ENCODE measurements at regions of chrX and their contacts with region 1.

Region 1: DNA sequence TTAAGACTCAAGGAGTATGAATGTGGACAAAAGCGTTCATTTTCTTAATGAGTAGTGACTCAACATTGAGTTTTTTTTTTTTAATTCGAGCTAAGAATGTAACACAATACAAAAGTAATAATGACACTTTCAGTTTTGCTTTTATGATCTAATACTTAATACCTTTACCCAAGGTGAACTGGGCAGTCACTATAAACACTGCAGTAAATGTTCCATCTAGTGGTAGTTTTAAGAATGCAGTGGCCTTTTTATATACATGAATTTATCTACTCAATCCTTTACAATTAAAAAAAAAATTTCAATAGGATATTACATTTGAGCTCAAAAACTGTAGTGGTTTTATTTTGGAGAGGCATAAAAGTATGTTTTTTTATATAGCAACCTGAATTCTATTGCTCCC is 33.9 kb downstream of the PDK3 start:
- DNase-seq: peak in 1 of 35 experiments; percentile 65
- ATAC-seq: peak; percentile 45 to 85 (median 65)
- H3K4me3 ChIP-seq: no peak overlapping the region
- H3K4me3 Mint-ChIP-seq: peak overlapping the region in 2 of 3 donors; percentile 17 to 40
- H3K27ac ChIP-seq: peak overlapping the region; percentile 67
- H3K27ac Mint-ChIP-seq: peak overlapping the region; percentile 69 to 82
- H3K4me1 ChIP-seq: peaks cover 0 to 8% of the 10 kb centered on the region in 2 experiments
- H3K4me1 Mint-ChIP-seq: peaks cover 26 to 30% (median 27%) of the 10 kb centered on the region in 3 donors
- H3K27me3 ChIP-seq: no peaks in the 10 kb centered on the region
- H3K27me3 Mint-ChIP-seq: no peaks in the 10 kb centered on the region

Region 2: DNA sequence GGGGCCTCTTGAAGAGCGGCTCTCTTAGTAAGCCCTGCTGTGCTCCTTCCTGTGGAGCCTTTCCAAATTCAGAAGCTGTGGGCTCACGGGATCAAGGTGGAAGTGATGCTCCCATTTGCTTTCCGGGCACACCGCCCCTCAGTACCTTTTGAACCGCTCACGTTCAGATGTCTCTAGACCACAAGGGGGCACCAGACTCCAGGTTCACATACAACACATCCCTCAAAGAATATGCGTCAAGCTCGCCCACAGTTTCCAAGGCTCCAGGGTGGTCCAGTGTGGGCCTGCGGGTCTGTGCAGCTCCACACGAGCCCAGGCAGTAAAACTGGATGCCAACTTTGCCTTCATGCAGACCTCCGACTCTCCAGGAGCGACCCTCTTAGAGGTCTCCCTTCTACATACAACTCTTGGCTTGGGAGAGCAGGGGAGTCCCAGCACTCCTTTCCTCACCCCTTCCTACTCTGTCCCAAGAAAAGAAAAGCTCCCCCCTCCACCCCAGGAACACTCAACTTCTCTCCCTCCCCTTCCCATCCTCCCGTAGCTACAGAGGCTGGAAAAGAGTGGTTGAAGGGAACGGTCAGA is 127.5 kb before region 1 on chrX:
- CTCF ChIA-PET with region 1: interaction called, 28 to 47 read pairs
- POLR2A ChIA-PET with region 1: no interaction called
- DNase-seq: peak; percentile 6 to 76 (median 40)
- ATAC-seq: peak; percentile 63 to 81 (median 72)
- H3K4me3 ChIP-seq: no peak overlapping the region
- H3K4me3 Mint-ChIP-seq: peak overlapping the region; percentile 32 to 45 (median 38)
- H3K27ac ChIP-seq: no peak overlapping the region
- H3K27ac Mint-ChIP-seq: no peak overlapping the region
- H3K4me1 ChIP-seq: peaks cover 0 to 9% of the 10 kb centered on the region in 2 experiments
- H3K4me1 Mint-ChIP-seq: peaks cover 8 to 11% (median 10%) of the 10 kb centered on the region in 3 donors
- H3K27me3 ChIP-seq: peaks cover 0 to 14% of the 10 kb centered on the region in 2 experiments
- H3K27me3 Mint-ChIP-seq: peaks cover 3 to 24% of the 10 kb centered on the region in 2 donors

Region 3: DNA sequence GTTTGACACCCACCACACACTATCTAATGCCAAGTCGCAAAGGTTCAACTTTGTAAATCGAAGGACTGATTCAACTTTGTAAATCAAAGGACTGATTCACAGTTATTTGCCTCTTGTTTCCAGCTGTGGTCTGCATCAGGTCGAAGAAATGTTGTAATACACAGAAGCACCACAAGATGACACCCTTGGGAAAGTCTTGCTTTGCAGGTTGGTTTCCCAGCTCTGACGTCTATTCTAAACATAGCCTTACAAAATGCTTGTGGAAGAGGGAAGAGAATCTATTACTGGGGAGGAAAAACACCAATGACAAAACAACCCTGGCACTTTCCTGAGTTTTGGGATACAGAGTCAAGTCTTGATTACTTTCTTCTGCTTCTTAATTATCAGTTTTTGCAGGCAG is 103.2 kb before region 1 on chrX:
- CTCF ChIA-PET with region 1: interaction called, 133 to 200 read pairs
- POLR2A ChIA-PET with region 1: no interaction called
- DNase-seq: peak in 28 of 35 experiments; percentile 2 to 79 (median 25)
- ATAC-seq: peak; percentile 50 to 70 (median 64)
- H3K4me3 ChIP-seq: no peak overlapping the region
- H3K4me3 Mint-ChIP-seq: no peak overlapping the region
- H3K27ac ChIP-seq: no peak overlapping the region
- H3K27ac Mint-ChIP-seq: no peak overlapping the region
- H3K4me1 ChIP-seq: no peaks in the 10 kb centered on the region
- H3K4me1 Mint-ChIP-seq: peaks cover 0 to 5% (median 4%) of the 10 kb centered on the region in 3 donors
- H3K27me3 ChIP-seq: peaks cover 0 to 2% of the 10 kb centered on the region in 2 experiments
- H3K27me3 Mint-ChIP-seq: peaks cover 6 to 38% of the 10 kb centered on the region in 2 donors

Region 4: GRCh38 chrX:24444645-24445044 is 54.3 kb before region 1 on chrX:
- CTCF ChIA-PET with region 1: no interaction called
- POLR2A ChIA-PET with region 1: no interaction called
- DNase-seq: no peak
- ATAC-seq: no peak
- H3K4me3 ChIP-seq: no peak overlapping the region
- H3K4me3 Mint-ChIP-seq: no peak overlapping the region
- H3K27ac ChIP-seq: no peak overlapping the region
- H3K27ac Mint-ChIP-seq: no peak overlapping the region
- H3K4me1 ChIP-seq: no peaks in the 10 kb centered on the region
- H3K4me1 Mint-ChIP-seq: no peaks in the 10 kb centered on the region
- H3K27me3 ChIP-seq: no peaks in the 10 kb centered on the region
- H3K27me3 Mint-ChIP-seq: peaks cover 0 to 8% of the 10 kb centered on the region in 2 donors

Region 5: GRCh38 chrX:24464836-24465531 is 34.0 kb before region 1 on chrX and contains the start of gene PDK3:
- CTCF ChIA-PET with region 1: interaction called, 12 to 26 read pairs
- POLR2A ChIA-PET with region 1: interaction called in 1 of 2 experiments, 5 read pairs
- DNase-seq: peak; percentile 73 to 93 (median 86)
- ATAC-seq: peak; percentile 95 to 98 (median 96)
- H3K4me3 ChIP-seq: peak within 1 kb of the TSS; percentile 69 to 81
- H3K4me3 Mint-ChIP-seq: peak within 1 kb of the TSS; percentile 83 to 84 (median 84)
- H3K27ac ChIP-seq: peak within 1 kb of the TSS; percentile 94
- H3K27ac Mint-ChIP-seq: peak within 1 kb of the TSS; percentile 87 to 89
- H3K4me1 ChIP-seq: peaks cover 17 to 20% of the 10 kb centered on the region in 2 experiments
- H3K4me1 Mint-ChIP-seq: peaks cover 31 to 40% (median 37%) of the 10 kb centered on the region in 3 donors
- H3K27me3 ChIP-seq: no peaks in the 10 kb centered on the region
- H3K27me3 Mint-ChIP-seq: no peaks in the 10 kb centered on the region
- total RNA-seq, gene PDK3: 17.0 to 23.6 (median 19.9) TPM

Region 6: GRCh38 chrX:24479924-24480323 is 19.1 kb before region 1 on chrX:
- CTCF ChIA-PET with region 1: interaction called, 6 to 34 read pairs
- POLR2A ChIA-PET with region 1: interaction called, 6 to 7 read pairs
- DNase-seq: peak; percentile 42 to 90 (median 75)
- ATAC-seq: peak; percentile 97 to 99 (median 98)
- H3K4me3 ChIP-seq: peak overlapping the region; percentile 38 to 42
- H3K4me3 Mint-ChIP-seq: peak overlapping the region; percentile 52 to 76 (median 68)
- H3K27ac ChIP-seq: peak overlapping the region; percentile 95
- H3K27ac Mint-ChIP-seq: peak overlapping the region; percentile 92
- H3K4me1 ChIP-seq: peaks cover 33 to 38% of the 10 kb centered on the region in 2 experiments
- H3K4me1 Mint-ChIP-seq: peaks cover 44 to 80% (median 79%) of the 10 kb centered on the region in 3 donors
- H3K27me3 ChIP-seq: no peaks in the 10 kb centered on the region
- H3K27me3 Mint-ChIP-seq: peaks cover 0 to 4% of the 10 kb centered on the region in 2 donors

Region 7: DNA sequence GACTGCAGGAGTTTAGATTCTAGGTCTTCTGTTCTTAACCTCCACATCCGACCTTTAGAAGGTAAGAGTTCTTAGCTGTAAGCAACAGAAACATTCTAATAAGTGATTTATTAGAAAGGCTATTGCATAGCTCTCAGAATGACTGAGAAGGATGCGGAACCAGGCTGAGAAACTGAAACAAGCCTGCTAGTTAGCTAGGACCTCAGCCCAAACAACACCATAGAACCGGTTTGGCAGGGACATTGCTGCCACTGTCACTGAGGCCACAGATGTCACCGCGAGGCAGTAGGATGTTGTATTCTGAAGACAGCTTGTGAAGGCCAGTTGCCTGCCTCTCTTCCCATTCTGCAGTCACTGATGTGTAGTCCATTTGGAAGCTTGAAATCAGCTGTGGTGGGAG is 676.8 kb after region 1 on chrX:
- CTCF ChIA-PET with region 1: no interaction called
- POLR2A ChIA-PET with region 1: no interaction called
- DNase-seq: no peak
- ATAC-seq: no peak
- H3K4me3 ChIP-seq: no peak overlapping the region
- H3K4me3 Mint-ChIP-seq: no peak overlapping the region
- H3K27ac ChIP-seq: no peak overlapping the region
- H3K27ac Mint-ChIP-seq: no peak overlapping the region
- H3K4me1 ChIP-seq: no peaks in the 10 kb centered on the region
- H3K4me1 Mint-ChIP-seq: no peaks in the 10 kb centered on the region
- H3K27me3 ChIP-seq: no peaks in the 10 kb centered on the region
- H3K27me3 Mint-ChIP-seq: peaks cover 2 to 18% of the 10 kb centered on the region in 2 donors

Measured in T-cell (primary cell).